Activated CD4-positive, alpha-beta memory T cell treated with anti-CD3 and anti-CD28 coated beads, Interleukin-2, amount 10 ng/mL, durations not matched to agents 7 days and 5 days (primary cell): ENCODE measurements at regions of chr11 and their contacts with region 1.

Region 1: GRCh38 chr11:116787786-116788486 is at the start of gene ZPR1:
- DNase-seq: peak; percentile 89
- H3K4me3 Mint-ChIP-seq: peak within 1 kb of the TSS; percentile 91
- H3K27ac Mint-ChIP-seq: peak within 1 kb of the TSS; percentile 82
- H3K4me1 Mint-ChIP-seq: peaks cover 52% of the 10 kb centered on the region
- H3K27me3 Mint-ChIP-seq: peaks cover 9% of the 10 kb centered on the region
- total RNA-seq, gene ZPR1: 55.6 to 57.6 TPM

Region 2: GRCh38 chr11:116615211-116615865 is 172.6 kb before region 1 on chr11:
- CTCF ChIA-PET with region 1: no interaction called
- POLR2A ChIA-PET with region 1: no interaction called
- DNase-seq: no peak
- H3K4me3 Mint-ChIP-seq: no peak overlapping the region
- H3K27ac Mint-ChIP-seq: no peak overlapping the region
- H3K4me1 Mint-ChIP-seq: no peaks in the 10 kb centered on the region
- H3K27me3 Mint-ChIP-seq: peaks cover 2% of the 10 kb centered on the region

Region 3: GRCh38 chr11:116798368-116798767 is 10.4 kb after region 1 on chr11:
- CTCF ChIA-PET with region 1: interaction called, 23 read pairs
- POLR2A ChIA-PET with region 1: interaction called, 3 read pairs
- DNase-seq: no peak
- H3K4me3 Mint-ChIP-seq: no peak overlapping the region
- H3K27ac Mint-ChIP-seq: no peak overlapping the region
- H3K4me1 Mint-ChIP-seq: no peaks in the 10 kb centered on the region
- H3K27me3 Mint-ChIP-seq: peaks cover 23% of the 10 kb centered on the region

Region 4: DNA sequence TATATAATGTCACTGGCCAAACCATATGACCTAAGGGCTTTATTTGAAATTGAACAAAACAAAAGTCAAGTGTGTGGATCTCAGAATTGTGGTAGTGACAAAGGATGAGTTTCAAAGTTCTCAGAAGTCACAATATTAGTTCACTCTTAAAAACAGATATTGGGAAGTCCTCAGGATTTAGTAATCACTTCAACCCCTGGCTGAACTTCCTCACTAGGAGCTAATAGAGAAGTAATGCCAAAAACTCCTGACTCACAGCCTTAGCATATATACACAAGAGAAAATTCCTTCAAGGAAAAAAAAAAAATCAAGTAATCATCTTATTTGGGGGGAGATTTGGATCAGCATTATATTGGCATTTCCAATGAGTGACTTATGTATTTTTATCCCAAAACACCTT is 125.1 kb after region 1 on chr11:
- CTCF ChIA-PET with region 1: no interaction called
- POLR2A ChIA-PET with region 1: no interaction called
- DNase-seq: no peak
- H3K4me3 Mint-ChIP-seq: no peak overlapping the region
- H3K27ac Mint-ChIP-seq: no peak overlapping the region
- H3K4me1 Mint-ChIP-seq: peaks cover 19% of the 10 kb centered on the region
- H3K27me3 Mint-ChIP-seq: no peaks in the 10 kb centered on the region